KBM-7 (cell line): ENCODE measurements at regions of chr3 and their contacts with region 1.

Region 1: DNA sequence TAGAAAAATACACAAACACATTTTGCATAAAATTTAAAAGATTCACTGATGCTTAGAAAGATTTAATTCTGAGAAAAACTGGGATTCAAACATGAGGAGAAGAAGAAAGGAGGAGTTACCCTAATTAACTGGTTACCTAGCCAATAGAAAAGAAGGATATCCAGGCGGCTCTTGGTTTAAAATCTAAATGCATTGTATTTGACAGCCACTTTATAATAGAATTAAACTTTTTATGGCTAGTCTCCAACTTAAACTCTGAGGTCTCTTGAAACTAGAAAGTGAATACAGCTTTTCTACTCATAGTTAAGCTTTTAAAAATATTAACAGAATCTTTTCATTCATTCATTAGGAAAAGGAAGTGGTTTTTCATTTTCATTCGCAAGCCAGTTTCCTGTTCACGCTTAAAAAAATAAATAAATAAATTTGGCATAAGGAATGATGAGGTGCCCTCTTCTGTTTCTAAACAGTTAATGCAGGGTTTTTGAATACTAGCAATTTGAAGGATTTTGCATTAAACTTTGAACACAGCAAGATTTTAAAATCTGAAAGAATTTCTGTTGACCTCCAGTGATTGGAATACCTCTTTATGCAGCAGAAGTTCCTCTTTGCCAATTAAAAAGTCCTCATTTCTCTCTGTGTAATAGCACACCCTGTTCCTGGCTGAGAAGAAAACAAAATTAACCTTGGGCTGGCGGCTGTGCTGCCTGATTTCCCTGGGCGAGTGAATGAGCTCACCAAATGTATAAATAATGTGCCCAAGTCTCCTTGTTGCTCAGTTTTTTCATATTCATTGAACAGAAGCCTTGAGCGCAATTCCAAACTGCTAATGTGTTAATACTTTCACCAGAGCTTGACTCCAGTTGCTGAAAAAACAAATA is 105.1 kb downstream of the ZMAT3 start:
- DNase-seq: peak; percentile 38

Region 2: DNA sequence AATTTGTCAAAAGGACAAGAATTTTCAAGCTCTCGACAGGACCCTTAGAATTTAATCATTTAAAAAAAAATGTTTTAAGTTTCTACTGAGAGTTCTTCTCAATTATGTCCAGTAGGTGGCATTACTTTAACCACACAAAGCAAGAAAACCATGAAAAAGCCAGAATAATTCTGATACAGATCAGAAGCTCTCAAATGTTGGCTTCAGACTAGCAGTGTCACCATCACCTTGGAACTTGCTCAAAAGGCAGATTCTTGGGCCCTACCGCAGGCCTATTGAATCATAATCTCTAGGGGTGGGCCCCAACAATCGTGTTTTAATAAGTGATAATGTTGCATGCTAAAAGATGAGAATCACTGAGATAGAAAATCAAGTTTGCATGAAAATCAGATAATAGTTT is 529.8 kb before region 1 on chr3:
- in situ Hi-C with region 1: loop called (anchors 25 kb)
- DNase-seq: peak; percentile 57

Region 3: DNA sequence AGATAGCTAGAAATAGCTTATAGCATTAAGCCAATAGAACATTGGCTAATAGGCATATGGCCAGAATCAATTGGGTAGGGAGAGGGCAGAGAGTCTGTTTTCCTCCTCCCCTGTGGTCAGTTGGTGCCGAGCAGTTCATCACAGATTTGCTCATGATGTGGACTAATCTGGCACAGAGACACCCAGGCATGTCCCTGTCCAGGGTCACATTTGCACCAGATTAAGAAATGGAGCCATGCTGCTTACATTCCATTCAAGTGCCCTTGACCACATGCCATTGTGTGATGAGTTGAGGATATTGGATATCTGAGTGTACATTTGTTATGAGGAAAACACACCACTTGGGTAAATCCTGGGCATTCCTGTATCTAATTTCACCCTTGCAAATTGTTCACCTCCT is 739.7 kb after region 1 on chr3:
- in situ Hi-C with region 1: no loop called
- DNase-seq: no peak